Ovary (tissue), 10 donors: ENCODE measurements at regions of chr3 and their contacts with region 1.

Region 1: DNA sequence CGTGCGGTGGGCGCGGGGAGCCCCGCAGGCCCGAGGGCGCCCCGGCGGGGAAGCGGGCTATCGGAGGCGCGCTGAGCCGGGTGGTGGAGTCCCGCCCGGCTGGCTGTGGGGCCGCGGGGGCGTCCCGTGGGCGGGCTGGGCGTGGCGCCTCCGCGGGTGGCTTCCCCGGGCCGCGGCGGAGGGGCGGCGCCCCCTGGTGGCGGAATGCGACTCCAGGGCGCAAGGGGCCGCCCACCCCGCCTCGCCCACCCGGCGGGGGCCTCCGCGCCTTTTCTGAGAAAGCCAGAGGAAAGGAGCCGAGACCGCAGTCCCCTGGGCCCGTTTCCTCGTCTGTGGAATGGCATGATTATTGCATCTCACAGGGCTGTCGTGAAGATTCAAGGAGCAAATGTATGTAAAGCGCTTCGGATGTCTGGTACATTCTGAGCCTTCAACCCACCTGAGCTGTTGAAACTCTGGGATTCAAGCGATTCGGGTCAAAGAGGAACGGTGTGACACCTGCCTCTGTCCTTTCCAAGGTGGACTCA is 31.9 kb upstream of the RAB6B start:
- DNase-seq: peak; percentile 58 to 82 (median 73)
- H3K4me3 ChIP-seq: peak overlapping the region; percentile 47
- H3K27ac ChIP-seq: no peak overlapping the region
- H3K4me1 ChIP-seq: peaks cover 4% of the 10 kb centered on the region
- H3K27me3 ChIP-seq: no peaks in the 10 kb centered on the region
- CTCF ChIP-seq: peak; percentile 32 to 77 (median 73)
- EP300 ChIP-seq: no peak
- POLR2A ChIP-seq: no peak

Region 2: GRCh38 chr3:133812872-133813271 is 114.7 kb before region 1 on chr3:
- intact Hi-C with region 1: loop called in 2 of 4 experiments (anchors 5 kb)
- DNase-seq: no peak
- H3K4me3 ChIP-seq: no peak overlapping the region
- H3K27ac ChIP-seq: no peak overlapping the region
- H3K4me1 ChIP-seq: no peaks in the 10 kb centered on the region
- H3K27me3 ChIP-seq: no peaks in the 10 kb centered on the region
- CTCF ChIP-seq: no peak
- EP300 ChIP-seq: no peak
- POLR2A ChIP-seq: no peak

Region 3: DNA sequence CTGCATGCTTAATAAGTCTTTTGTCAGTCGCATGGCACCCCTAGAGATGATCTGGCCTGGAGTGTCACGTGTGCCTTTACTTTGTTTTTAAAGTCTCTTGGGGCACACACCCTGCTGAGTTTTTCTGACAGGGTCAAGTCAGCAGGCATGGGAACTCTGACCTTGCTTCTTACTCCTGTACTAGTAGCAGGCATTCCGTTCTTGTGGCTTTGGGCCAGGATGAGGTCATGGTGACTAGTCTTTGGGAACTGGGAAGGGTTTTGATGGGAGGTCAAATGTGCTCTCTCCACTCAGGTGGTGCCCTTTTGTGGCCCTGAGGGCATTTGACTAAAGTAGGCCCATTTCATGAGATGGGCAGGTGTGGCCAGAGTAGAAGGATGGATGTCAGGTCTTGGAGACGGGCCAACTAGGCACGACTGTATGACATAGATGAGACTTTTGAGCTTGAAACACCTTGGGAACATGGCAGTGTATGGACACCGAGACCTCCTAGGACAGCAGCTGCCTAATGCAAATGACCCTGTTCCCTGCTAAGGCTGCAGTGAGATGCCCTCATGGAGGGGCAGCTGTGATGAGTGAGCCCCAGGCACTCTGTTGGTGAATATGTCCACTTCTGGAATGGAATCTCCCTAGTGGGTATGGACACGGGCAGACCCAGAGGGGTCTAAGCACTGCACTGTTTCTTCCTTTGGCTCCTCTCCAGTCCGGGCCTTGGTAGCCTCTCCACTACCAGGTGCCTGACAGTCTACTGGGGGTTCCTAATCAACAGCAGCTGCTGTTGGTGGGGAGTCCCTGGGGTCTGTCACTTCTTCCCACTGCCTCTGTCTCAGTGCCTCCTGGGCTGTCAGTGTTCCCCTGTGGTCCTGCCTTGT is 105.6 kb before region 1 on chr3:
- intact Hi-C with region 1: loop called (anchors 2 to 5 kb)
- DNase-seq: peak in 4 of 5 donors; percentile 35 to 59 (median 48)
- H3K4me3 ChIP-seq: no peak overlapping the region
- H3K27ac ChIP-seq: no peak overlapping the region
- H3K4me1 ChIP-seq: no peaks in the 10 kb centered on the region
- H3K27me3 ChIP-seq: no peaks in the 10 kb centered on the region
- CTCF ChIP-seq: no peak
- EP300 ChIP-seq: no peak
- POLR2A ChIP-seq: no peak

Region 4: DNA sequence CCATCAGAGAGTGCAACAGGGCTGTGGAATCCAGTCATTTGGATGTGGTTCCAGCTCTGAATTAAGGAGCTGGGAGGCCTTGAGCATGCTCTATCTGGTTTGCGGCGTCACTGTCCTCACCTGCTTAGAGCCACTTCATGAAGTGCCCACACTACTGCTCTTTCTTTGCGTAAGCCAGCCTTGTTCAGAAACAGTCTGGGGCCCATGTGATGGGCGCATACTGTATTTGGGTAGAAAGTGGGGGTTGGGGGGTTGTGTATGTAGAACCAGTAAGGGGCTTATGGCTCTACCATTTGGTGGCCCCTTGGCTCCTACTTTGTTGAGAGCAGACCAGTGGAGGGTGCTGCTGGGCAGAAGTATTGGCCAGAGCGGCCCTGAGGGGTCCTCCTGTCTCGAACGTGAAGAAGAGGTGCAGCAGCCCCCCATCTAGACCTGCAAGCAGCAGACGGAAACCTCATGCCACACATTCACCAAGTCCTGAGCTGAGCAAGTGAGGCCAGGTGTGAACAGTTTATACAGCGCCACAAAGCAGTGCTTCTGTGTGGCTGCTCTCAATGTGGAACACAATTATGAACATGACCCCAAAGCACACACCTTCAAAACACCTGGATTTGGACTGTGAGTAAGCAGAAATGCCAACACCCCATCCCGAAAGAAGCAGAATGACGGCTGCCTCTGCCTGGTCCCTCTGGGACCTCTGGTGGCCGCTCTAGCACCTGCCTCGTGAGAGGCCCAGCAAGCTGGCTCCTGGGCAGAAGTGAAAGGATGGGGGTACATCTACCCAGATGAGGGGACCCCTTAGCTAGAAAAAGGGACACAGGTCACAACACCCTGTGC is 95.4 kb before region 1 on chr3:
- intact Hi-C with region 1: no loop called
- DNase-seq: no peak
- H3K4me3 ChIP-seq: no peak overlapping the region
- H3K27ac ChIP-seq: no peak overlapping the region
- H3K4me1 ChIP-seq: no peaks in the 10 kb centered on the region
- H3K27me3 ChIP-seq: no peaks in the 10 kb centered on the region
- CTCF ChIP-seq: no peak
- EP300 ChIP-seq: no peak
- POLR2A ChIP-seq: no peak

Region 5: GRCh38 chr3:133851266-133851906 is 76.2 kb before region 1 on chr3:
- intact Hi-C with region 1: no loop called
- DNase-seq: no peak
- H3K4me3 ChIP-seq: no peak overlapping the region
- H3K27ac ChIP-seq: no peak overlapping the region
- H3K4me1 ChIP-seq: no peaks in the 10 kb centered on the region
- H3K27me3 ChIP-seq: no peaks in the 10 kb centered on the region
- CTCF ChIP-seq: no peak
- EP300 ChIP-seq: no peak
- POLR2A ChIP-seq: no peak

Region 6: GRCh38 chr3:134282664-134283047 is 355.1 kb after region 1 on chr3:
- intact Hi-C with region 1: loop called in 1 of 4 experiments (anchors 10 kb)
- DNase-seq: no peak
- H3K4me3 ChIP-seq: no peak overlapping the region
- H3K27ac ChIP-seq: no peak overlapping the region
- H3K4me1 ChIP-seq: no peaks in the 10 kb centered on the region
- H3K27me3 ChIP-seq: no peaks in the 10 kb centered on the region
- CTCF ChIP-seq: no peak
- EP300 ChIP-seq: no peak
- POLR2A ChIP-seq: no peak